ENCODE measurements at regions of chr15 and their contacts with region 1.

Region 1: GRCh38 chr15:74950078-74951000 is 6.2 kb downstream of the RPP25 start:
- DNase-seq: peak; percentile 83 to 90
- ATAC-seq: peak; percentile 71 to 85
- H3K4me3 ChIP-seq: no peak overlapping the region
- H3K27ac ChIP-seq: no peak overlapping the region
- H3K4me1 ChIP-seq: peaks cover 21% of the 10 kb centered on the region; the same call in 2 of the 3 replicates
- CTCF ChIP-seq: peak; percentile 99
- EP300 ChIP-seq: no peak
- POLR2A ChIP-seq: no peak
- RAD21 ChIP-seq: peak; percentile 96 to 99

Region 2: DNA sequence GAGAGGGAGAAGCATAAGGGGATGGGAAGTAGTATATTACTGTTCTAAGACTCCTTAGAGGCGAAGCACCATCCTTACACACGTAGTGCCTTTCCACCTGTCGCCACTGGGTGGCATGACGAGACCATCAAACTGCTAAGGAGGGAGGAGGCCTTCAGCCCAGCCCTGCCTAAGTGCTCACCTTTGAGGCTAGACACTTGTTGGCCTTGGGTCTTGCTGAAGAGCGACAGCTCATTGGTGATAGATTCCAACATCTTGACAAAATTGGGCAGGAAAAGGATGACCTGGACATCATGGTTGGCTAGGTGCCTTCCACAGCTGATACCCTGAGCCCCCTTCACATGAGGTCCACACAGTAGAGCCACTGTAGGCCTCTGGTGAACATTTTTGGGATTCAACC is 315.1 kb before region 1 on chr15:
- CTCF ChIA-PET with region 1: interaction called, 10 read pairs
- POLR2A ChIA-PET with region 1: no interaction called
- DNase-seq: peak; percentile 54 to 68
- ATAC-seq: peak; percentile 75 to 85
- H3K4me3 ChIP-seq: no peak overlapping the region
- H3K27ac ChIP-seq: no peak overlapping the region; a peak in 1 of 6 replicates
- H3K4me1 ChIP-seq: no peaks in the 10 kb centered on the region
- CTCF ChIP-seq: peak; percentile 72
- EP300 ChIP-seq: no peak
- POLR2A ChIP-seq: no peak
- RAD21 ChIP-seq: peak; percentile 80 to 88

Region 3: GRCh38 chr15:74897300-74897701 is 53.0 kb before region 1 on chr15:
- CTCF ChIA-PET with region 1: interaction called, 48 read pairs
- POLR2A ChIA-PET with region 1: no interaction called
- DNase-seq: no peak
- ATAC-seq: peak; percentile 6 to 9; a peak in 3 of 6 replicates
- H3K4me3 ChIP-seq: no peak overlapping the region
- H3K27ac ChIP-seq: no peak overlapping the region
- H3K4me1 ChIP-seq: 0 out of 3 replicates have a peak, but pooled peaks cover 2% of the 10 kb centered on the region
- CTCF ChIP-seq: no peak
- EP300 ChIP-seq: no peak
- POLR2A ChIP-seq: no peak
- RAD21 ChIP-seq: no peak

Region 4: DNA sequence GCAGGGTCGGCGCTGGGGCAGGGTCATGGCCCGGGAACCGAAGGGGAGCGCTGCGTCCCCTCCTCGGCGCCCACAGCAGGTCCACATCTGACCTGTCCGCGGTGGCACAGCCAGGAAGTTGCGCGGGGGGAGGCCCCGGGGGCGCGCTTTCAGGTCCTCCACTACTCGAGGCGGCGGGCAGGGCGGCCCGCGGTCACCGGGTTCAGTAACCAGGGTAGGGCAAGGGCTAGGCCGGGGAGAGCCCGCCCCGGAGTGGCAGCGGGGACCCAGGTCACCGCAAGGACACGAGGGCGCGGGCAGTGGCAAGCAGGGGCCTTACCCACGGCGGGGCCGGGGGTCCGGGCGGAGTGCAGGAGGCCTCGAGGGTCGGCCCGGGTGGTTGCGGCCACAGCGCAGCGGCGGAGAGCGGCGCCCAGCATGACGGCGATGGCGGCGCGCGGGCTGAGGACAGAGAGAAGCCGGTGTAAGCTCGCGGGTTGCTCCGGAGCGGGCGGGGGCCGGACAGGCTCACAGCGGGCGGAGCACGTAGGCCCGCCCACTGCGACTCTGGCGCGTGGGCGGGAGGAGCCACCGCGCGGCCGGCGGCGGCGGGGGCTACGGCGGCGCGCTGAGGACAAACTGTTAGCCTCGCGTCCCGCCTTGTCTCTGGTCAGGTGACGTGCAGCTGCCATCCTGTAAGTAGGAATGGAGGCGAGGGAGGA is 12.6 kb before region 1 on chr15 and contains the start of gene COX5A:
- CTCF ChIA-PET with region 1: interaction called, 50 read pairs
- POLR2A ChIA-PET with region 1: interaction called, 16 read pairs
- DNase-seq: peak; percentile 93 to 99
- ATAC-seq: peak; percentile 95
- H3K4me3 ChIP-seq: peak within 1 kb of the TSS; percentile 65
- H3K27ac ChIP-seq: peak within 1 kb of the TSS; percentile 88 to 95
- H3K4me1 ChIP-seq: peaks cover 9% of the 10 kb centered on the region; the same call in 1 of the 3 replicates
- CTCF ChIP-seq: no peak
- EP300 ChIP-seq: no peak
- POLR2A ChIP-seq: peak; percentile 96
- RAD21 ChIP-seq: no peak
- polyA plus RNA-seq, gene COX5A: 328 and 391 TPM in 2 replicates

Region 5: GRCh38 chr15:74978503-74978902 is 28.2 kb after region 1 on chr15:
- CTCF ChIA-PET with region 1: interaction called, 11 read pairs
- POLR2A ChIA-PET with region 1: no interaction called
- DNase-seq: no peak
- ATAC-seq: peak; percentile 68 to 80; a peak in 4 of 6 replicates
- H3K4me3 ChIP-seq: no peak overlapping the region
- H3K27ac ChIP-seq: no peak overlapping the region
- H3K4me1 ChIP-seq: peaks cover 9% of the 10 kb centered on the region; the same call in 2 of the 3 replicates
- CTCF ChIP-seq: no peak
- EP300 ChIP-seq: no peak
- POLR2A ChIP-seq: no peak
- RAD21 ChIP-seq: no peak

Measured in A549 (cell line).